GM13976 (cell line): ENCODE measurements at regions of chr2 and their contacts with region 1.

Region 1: GRCh38 chr2:117470311-117471095 is 344.0 kb upstream of the DDX18 start:
- DNase-seq: peak; percentile 10
- CTCF ChIP-seq: peak; percentile 52

Region 2: DNA sequence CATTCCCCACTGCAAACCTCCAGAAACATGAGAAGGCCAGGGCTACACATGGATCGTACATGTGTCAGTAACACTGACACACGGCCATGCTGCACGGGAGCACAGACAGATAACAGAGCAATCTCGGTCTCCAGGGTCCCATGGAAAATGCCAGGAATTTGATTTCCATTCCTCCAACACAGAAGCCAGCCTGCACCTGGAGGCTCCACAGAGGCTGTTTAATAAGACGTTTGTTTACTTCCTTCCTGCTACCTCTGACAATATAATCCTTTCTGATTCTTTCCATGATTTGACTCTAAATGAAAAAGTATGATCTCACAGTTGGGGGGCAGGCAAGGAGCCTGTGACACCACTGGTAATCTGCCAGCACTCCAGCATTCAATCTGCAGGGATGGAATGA is 133.1 kb after region 1 on chr2:
- in situ Hi-C with region 1: no loop called
- DNase-seq: no peak
- CTCF ChIP-seq: no peak

Region 3: GRCh38 chr2:117785740-117786139 is 315.2 kb after region 1 on chr2:
- in situ Hi-C with region 1: loop called (anchors 25 kb)
- DNase-seq: peak; percentile 34
- CTCF ChIP-seq: peak; percentile 47